Ascending aorta (tissue), 2 donors: ENCODE measurements at regions of chr4 and their contacts with region 1.

Region 1: DNA sequence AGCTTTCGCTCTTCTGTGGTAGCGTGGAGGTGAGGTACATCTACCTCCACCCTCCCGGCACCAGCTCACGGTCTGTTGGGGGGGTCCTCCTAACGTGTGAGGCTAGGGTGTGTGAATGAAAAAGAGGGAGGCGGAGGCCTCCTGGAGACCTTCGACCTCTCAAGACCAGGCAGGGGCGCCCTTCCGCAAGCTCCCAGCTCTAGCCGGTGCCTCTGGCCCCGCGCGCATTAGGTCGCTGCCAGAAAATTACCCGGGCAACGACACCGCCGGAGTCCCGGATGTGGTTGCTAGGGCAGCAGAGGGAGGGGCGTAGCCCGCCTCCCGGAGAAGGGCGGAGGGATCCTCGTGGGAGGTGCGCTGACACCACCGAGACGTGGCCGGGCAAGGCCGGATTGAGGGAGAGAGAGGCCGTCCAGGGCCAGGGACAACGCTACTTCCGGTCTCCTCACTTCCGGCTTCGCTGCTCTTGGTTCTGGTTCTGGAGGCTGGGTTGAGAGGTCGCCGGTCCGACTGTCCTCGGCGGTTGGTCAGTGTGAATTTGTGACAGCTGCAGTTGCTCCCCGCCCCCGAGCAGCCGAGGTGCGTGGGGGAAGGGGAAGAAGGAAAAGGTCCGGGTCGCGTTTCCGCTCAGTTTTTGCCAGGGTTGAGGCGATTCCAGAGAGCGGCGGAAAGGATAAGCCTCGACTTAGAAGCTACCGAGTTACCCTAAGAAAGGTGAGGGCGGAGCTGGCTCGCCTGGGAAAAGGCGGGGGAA is at the starts of genes ARFIP1 and TIGD4:
- DNase-seq: peak; percentile 86 to 99
- H3K4me3 ChIP-seq: peak within 1 kb of the TSS; percentile 79 to 81
- H3K27ac ChIP-seq: peak within 1 kb of the TSS; percentile 84 to 88
- H3K4me1 ChIP-seq: peaks cover 0 to 6% of the 10 kb centered on the region in 2 donors
- H3K27me3 ChIP-seq: no peaks in the 10 kb centered on the region
- CTCF ChIP-seq: peak in 1 of 3 experiments; percentile 32
- total RNA-seq, gene ARFIP1: 11.6 TPM
- total RNA-seq, gene TIGD4: not detected

Region 2: DNA sequence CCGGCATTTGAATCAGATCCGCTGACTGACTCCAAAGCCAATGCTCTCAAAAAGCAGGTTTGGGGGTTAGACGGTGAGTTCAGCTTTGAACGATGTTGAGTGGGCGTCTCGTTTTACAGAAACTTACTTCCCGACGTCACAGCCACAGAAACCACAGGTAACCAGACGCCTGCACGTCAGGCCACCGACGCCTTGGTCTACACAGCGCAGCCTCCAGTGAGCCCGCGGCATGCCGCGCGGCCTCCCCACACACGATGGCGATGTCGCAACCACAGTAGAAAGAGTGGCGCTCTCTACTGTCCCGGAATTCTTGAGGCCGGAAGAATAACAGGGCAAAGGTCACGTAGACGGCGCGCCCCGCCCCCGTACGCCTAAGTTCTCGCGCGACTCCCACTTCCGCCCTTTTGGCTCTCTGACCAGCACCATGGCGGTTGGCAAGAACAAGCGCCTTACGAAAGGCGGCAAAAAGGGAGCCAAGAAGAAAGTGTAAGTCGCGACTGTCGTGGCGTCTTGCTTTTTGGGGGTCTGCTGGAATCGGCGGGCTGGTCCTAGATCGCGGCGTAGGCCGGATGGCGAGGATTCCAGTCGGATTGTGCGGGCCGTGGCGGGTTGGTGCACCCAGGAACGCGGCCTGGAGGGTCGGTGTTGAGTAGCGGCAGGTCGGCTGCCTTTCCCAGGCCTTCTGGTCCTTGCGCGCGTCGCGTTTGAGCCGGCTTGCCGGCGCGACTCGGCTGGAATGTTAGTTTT is 1680.3 kb before region 1 on chr4 and contains the start of gene RPS3A:
- intact Hi-C with region 1: loop called (anchors 1 kb)
- DNase-seq: peak; percentile 90 to 98
- H3K4me3 ChIP-seq: peak within 1 kb of the TSS; percentile 73
- H3K27ac ChIP-seq: peak within 1 kb of the TSS; percentile 90 to 93
- H3K4me1 ChIP-seq: peaks cover 6 to 18% of the 10 kb centered on the region in 2 donors
- H3K27me3 ChIP-seq: no peaks in the 10 kb centered on the region
- CTCF ChIP-seq: peak; percentile 82 to 87 (median 84)
- total RNA-seq, gene RPS3A: 1,276 TPM

Region 3: GRCh38 chr4:151760712-151761527 is 1018.8 kb before region 1 on chr4 and contains the start of gene GATB:
- intact Hi-C with region 1: loop called (anchors 2 kb)
- DNase-seq: peak; percentile 75 to 97
- H3K4me3 ChIP-seq: peak within 1 kb of the TSS; percentile 63 to 74
- H3K27ac ChIP-seq: peak within 1 kb of the TSS in 1 of 2 donors; percentile 29
- H3K4me1 ChIP-seq: peaks cover 0 to 4% of the 10 kb centered on the region in 2 donors
- H3K27me3 ChIP-seq: no peaks in the 10 kb centered on the region
- CTCF ChIP-seq: peak in 2 of 3 experiments; percentile 30 to 37
- total RNA-seq, gene GATB: 16.7 TPM

Region 4: GRCh38 chr4:152148057-152148456 is 631.6 kb before region 1 on chr4:
- intact Hi-C with region 1: no loop called
- DNase-seq: no peak
- H3K4me3 ChIP-seq: no peak overlapping the region
- H3K27ac ChIP-seq: no peak overlapping the region
- H3K4me1 ChIP-seq: no peaks in the 10 kb centered on the region
- H3K27me3 ChIP-seq: no peaks in the 10 kb centered on the region
- CTCF ChIP-seq: no peak

Region 5: GRCh38 chr4:153083447-153083947 is 303.8 kb after region 1 on chr4:
- intact Hi-C with region 1: loop called (anchors 10 kb)
- DNase-seq: peak in 1 of 2 donors; percentile 78
- H3K4me3 ChIP-seq: no peak overlapping the region
- H3K27ac ChIP-seq: no peak overlapping the region
- H3K4me1 ChIP-seq: peaks cover 0 to 6% of the 10 kb centered on the region in 2 donors
- H3K27me3 ChIP-seq: no peaks in the 10 kb centered on the region
- CTCF ChIP-seq: peak; percentile 56 to 76 (median 58)

Region 6: DNA sequence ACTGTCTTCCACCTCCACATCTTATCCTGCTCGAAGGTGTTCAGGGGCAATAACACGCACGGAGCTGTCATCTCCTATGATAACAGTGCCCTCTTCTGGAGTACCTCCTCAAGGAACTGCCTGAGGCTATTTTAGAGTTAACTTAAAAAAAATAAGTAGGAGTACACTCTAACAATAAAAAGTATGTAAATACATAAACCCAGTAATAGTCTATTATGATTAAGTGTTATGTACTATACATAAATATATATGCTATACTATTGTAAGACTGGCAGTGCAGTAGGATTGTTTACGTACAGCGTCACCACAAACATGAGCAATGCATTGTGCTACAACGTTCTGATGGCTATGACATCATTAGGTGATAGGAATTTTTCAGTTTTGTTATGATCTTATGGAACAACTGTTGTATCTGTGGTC is 869.9 kb after region 1 on chr4:
- intact Hi-C with region 1: loop called (anchors 10 kb)
- DNase-seq: no peak
- H3K4me3 ChIP-seq: no peak overlapping the region
- H3K27ac ChIP-seq: no peak overlapping the region
- H3K4me1 ChIP-seq: peaks cover 0 to 11% of the 10 kb centered on the region in 2 donors
- H3K27me3 ChIP-seq: no peaks in the 10 kb centered on the region
- CTCF ChIP-seq: no peak